ENCODE measurements at regions of chr3 and their contacts with region 1.

Region 1: DNA sequence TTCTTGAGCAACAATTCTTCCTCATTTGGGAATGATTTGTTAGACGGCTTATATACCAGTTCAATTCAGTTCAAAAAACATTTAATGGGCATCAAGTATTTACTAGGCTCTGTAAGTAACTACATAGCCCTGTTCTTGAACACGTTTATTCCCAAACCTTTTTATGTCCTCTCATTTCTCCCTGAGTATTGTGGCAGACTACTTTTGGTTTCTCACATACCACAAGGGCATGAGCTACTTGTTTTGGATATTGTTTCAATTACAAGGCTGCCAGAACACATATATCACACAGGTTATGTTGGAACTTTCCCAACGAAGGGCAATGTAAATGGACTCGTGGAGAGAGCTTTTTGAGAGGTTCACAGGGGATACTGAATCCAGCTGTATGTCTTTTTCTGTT is 363.8 kb upstream of the NAALADL2 start:
- DNase-seq: no peak
- ATAC-seq: no peak

Region 2: DNA sequence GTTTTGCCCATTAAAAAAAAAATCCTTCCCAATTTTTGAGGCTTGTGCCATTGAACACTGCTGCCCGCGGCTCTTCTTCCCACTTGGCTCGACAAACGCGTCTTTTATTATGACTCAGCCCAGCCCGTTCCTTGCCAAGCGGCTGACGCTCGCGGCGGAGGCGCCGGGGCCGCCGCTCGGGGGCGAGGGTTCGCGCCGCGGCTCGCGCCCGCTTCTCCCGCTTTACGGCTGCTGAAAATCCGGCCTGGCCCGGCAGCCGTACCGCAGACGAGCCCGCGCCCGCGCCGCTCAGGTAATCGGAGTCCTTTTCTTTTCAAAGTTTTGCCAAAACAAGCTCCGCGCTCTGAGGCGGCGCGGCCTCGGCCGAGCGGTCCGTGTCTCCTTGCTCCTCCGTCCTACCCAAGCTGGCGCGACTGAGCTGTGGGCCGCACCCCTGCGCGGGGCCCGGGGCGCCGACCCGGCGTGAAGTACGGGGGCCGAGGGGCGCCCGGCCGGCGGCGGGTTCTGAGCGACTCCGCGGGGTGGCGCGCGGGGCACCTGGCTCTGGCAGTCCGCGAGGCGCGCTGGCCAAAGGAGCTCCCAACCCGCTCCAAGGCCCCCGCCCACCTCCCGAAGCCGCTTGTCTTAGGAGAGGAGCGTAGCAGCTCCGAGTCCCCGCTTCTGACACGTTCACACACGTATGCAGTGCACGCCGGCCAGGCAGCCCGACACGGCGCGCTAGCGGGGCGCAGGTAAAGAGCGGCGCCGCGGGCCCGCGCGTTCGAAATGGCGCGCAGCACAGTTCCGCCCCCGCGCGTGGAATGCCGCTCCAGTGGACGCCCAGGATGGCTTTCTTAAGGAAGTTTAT is 54.3 kb before region 1 on chr3:
- intact Hi-C with region 1: loop called (anchors 5 kb)
- DNase-seq: peak; percentile 88
- ATAC-seq: peak; percentile 89